SK-N-SH (cell line): ENCODE measurements at regions of chr13 and their contacts with region 1.

Region 1: GRCh38 chr13:53151336-53152056 is 122.9 kb downstream of the OLFM4 start:
- DNase-seq: peak; percentile 54
- H3K4me3 ChIP-seq: peak overlapping the region in 1 of 2 experiments; percentile 51; a peak in 1 of 4 replicates
- H3K27ac ChIP-seq: no peak overlapping the region
- H3K4me1 ChIP-seq: no peaks in the 10 kb centered on the region; a peak in 1 of 4 replicates
- H3K27me3 ChIP-seq: no peaks in the 10 kb centered on the region
- CTCF ChIP-seq: peak; percentile 82
- EP300 ChIP-seq: no peak
- RAD21 ChIP-seq: peak; percentile 89

Region 2: GRCh38 chr13:52862358-52863206 is 288.9 kb before region 1 on chr13:
- CTCF ChIA-PET with region 1: interaction called, 16 read pairs
- POLR2A ChIA-PET with region 1: no interaction called
- DNase-seq: peak; percentile 59
- H3K4me3 ChIP-seq: no peak overlapping the region; a peak in 1 of 4 replicates
- H3K27ac ChIP-seq: no peak overlapping the region
- H3K4me1 ChIP-seq: no peaks in the 10 kb centered on the region
- H3K27me3 ChIP-seq: no peaks in the 10 kb centered on the region; the same call in 1 of the 2 replicates
- CTCF ChIP-seq: peak; percentile 79
- EP300 ChIP-seq: no peak
- RAD21 ChIP-seq: peak; percentile 48

Region 3: DNA sequence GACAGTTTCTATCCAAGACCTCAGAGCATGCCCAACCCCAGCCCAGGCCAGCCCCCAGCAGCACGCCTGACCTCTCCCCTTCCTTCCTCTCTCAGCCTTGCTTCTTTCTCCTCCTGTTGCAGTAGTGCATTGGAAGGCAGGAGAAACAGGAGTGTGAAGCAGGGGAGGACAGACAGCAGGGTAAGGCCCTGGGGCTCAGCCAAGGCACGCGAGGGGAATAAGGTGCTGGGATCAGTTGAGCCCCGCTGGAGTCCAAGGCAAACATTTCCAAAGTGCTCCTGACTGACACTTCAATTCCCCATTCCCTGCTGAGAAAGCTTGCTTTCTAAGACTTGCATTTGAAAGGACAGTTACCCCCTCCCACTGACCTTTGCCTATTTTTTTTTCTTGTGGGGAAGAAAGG is 196.0 kb before region 1 on chr13:
- CTCF ChIA-PET with region 1: interaction called, 17 read pairs
- POLR2A ChIA-PET with region 1: no interaction called
- DNase-seq: no peak
- H3K4me3 ChIP-seq: no peak overlapping the region
- H3K27ac ChIP-seq: no peak overlapping the region
- H3K4me1 ChIP-seq: no peaks in the 10 kb centered on the region
- H3K27me3 ChIP-seq: no peaks in the 10 kb centered on the region
- CTCF ChIP-seq: no peak
- EP300 ChIP-seq: no peak
- RAD21 ChIP-seq: no peak

Region 4: DNA sequence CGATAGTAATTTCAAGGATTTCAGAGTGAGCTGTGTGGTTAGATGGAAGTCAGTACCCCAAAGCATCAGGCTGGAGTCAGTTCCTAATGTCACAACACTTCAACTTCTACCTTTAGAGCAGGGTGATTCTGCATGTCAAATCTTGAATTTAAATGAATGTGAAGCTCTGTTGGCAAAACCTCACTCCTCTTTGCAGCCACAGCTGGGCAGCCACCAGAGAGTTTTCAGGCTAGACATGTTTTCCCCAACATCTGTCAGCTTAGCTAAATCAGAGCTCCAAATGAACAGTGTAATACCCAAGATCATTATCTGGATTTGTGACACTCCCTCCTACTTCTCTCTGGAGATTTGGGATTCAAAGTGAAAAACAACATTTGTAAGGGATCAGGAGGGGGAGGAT is 156.6 kb before region 1 on chr13:
- CTCF ChIA-PET with region 1: interaction called, 10 read pairs
- POLR2A ChIA-PET with region 1: no interaction called
- DNase-seq: no peak
- H3K4me3 ChIP-seq: no peak overlapping the region
- H3K27ac ChIP-seq: no peak overlapping the region
- H3K4me1 ChIP-seq: peaks cover 0 to 12% of the 10 kb centered on the region in 2 experiments; a peak in 2 of 4 replicates
- H3K27me3 ChIP-seq: no peaks in the 10 kb centered on the region
- CTCF ChIP-seq: no peak
- EP300 ChIP-seq: no peak
- RAD21 ChIP-seq: no peak

Region 5: DNA sequence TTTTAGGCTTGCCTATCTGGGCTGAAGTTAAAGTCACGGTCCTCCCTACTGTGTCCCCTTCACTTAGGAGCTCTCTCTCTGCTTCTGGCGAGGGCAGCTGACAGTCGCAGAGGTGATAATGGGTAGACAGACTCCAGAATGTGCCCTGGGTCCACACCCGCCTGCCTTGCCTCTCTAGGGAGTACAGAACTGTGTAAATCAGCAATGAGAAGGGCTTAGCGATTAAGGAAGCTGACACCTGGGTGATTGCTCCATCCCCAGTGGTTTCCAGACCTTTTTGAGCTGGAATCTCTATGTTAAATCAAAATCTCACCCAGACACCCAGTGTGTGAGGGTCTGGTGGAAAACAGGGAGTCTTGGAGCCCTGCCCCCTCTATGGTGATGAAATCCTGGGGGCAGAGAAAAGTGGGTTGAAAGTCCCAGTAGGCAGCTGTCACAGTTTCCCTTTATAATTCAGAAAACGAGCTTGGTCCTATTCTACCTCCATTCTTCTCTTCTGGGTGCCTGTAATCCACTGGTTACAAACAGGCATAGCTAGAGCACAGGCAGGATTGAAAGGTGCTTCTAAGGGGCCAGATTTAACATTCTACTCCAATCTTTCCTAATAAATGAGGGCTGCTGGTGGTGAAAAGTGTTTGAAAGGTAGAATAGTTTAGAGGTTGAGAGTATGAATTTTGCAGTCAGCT is 76.0 kb before region 1 on chr13:
- CTCF ChIA-PET with region 1: interaction called, 19 read pairs
- POLR2A ChIA-PET with region 1: no interaction called
- DNase-seq: no peak
- H3K4me3 ChIP-seq: no peak overlapping the region
- H3K27ac ChIP-seq: no peak overlapping the region; a peak in 1 of 4 replicates
- H3K4me1 ChIP-seq: peaks cover 0 to 20% of the 10 kb centered on the region in 2 experiments; a peak in 2 of 4 replicates
- H3K27me3 ChIP-seq: no peaks in the 10 kb centered on the region
- CTCF ChIP-seq: no peak
- EP300 ChIP-seq: no peak
- RAD21 ChIP-seq: no peak

Region 6: DNA sequence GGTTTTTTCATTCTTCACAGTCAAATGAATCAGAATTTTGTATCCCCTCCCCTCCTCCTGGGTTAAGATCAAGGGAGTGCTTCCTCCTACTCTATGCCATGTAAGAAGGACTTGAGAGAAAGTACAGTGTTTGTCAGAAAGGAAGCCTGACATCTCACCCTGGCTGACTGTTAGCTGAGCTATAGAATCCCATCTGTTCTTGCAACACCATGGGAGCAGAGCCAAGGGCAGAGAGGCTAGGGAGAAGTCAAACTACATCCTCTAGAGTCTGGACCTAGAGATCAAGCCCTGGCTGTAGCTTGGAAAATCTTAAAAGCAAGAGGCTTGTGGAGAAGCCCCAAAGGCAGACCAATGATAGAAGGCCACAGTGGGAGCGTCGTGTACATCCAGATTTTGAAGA is 23.0 kb after region 1 on chr13:
- CTCF ChIA-PET with region 1: interaction called, 12 read pairs
- POLR2A ChIA-PET with region 1: no interaction called
- DNase-seq: no peak
- H3K4me3 ChIP-seq: no peak overlapping the region
- H3K27ac ChIP-seq: no peak overlapping the region
- H3K4me1 ChIP-seq: no peaks in the 10 kb centered on the region
- H3K27me3 ChIP-seq: no peaks in the 10 kb centered on the region
- CTCF ChIP-seq: no peak
- EP300 ChIP-seq: no peak
- RAD21 ChIP-seq: no peak